Stomach (tissue), 19 donors: ENCODE measurements at regions of chr4 and their contacts with region 1.

Region 1: DNA sequence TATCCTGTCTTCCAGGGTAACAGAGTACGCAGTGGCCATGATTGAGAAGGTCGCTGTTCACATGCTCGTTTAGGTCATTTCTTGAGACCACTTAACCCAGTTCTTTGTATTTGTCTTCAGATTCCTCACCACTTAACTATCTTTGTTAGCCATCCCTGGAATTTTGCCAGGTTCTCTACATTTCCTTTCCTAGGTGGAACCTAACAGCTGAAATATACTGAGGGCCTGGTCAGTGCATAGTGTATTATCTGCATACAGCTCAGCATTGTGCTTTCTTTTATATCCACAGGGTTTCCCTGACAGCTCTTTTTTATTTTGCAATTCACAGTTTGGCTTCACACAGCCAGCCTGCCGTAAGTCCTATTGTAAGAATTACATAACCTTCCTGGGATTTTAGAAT is 148.9 kb upstream of the GALNT7 start:
- DNase-seq: no peak
- H3K4me3 ChIP-seq: no peak overlapping the region
- H3K27ac ChIP-seq: no peak overlapping the region
- H3K4me1 ChIP-seq: peaks cover 0 to 8% (median 4%) of the 10 kb centered on the region in 4 donors
- H3K27me3 ChIP-seq: no peaks in the 10 kb centered on the region
- CTCF ChIP-seq: no peak
- EP300 ChIP-seq: no peak
- POLR2A ChIP-seq: no peak

Region 2: GRCh38 chr4:173159791-173160190 is 140.1 kb after region 1 on chr4:
- intact Hi-C with region 1: no loop called
- DNase-seq: no peak
- H3K4me3 ChIP-seq: no peak overlapping the region
- H3K27ac ChIP-seq: no peak overlapping the region
- H3K4me1 ChIP-seq: no peaks in the 10 kb centered on the region
- H3K27me3 ChIP-seq: no peaks in the 10 kb centered on the region
- CTCF ChIP-seq: no peak
- EP300 ChIP-seq: no peak
- POLR2A ChIP-seq: no peak

Region 3: DNA sequence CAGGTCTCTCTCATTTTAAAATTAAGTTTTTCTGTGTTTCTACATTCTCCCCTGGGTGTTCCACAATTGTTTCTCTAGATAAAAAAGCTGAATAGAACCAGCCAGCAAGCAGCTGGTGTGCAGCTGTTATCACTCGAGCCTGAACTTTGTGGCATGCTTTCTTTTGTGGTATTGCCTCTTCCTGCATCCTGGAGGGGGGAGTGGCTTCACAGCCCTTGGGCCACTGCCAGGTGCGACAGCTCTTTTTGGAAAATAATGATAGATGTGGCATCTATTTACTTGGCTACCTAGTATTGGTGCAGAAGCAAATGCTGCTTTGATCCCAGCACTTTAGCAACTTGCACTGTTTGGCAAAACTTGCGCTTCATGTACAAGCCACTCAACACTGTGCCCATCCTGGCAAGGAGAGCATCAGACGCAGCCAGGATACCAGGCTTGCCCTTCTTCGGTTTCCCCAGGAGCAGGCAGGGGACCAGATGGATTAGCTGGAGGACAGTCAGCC is 245.0 kb after region 1 on chr4:
- intact Hi-C with region 1: loop called (anchors 5 kb)
- DNase-seq: peak; percentile 34 to 79
- H3K4me3 ChIP-seq: no peak overlapping the region
- H3K27ac ChIP-seq: peak overlapping the region in 2 of 5 donors; percentile 18 to 19
- H3K4me1 ChIP-seq: peaks cover 10 to 40% (median 23%) of the 10 kb centered on the region in 4 donors
- H3K27me3 ChIP-seq: no peaks in the 10 kb centered on the region
- CTCF ChIP-seq: no peak
- EP300 ChIP-seq: no peak
- POLR2A ChIP-seq: no peak